ENCODE measurements at regions of chr14 and their contacts with region 1.

Region 1: DNA sequence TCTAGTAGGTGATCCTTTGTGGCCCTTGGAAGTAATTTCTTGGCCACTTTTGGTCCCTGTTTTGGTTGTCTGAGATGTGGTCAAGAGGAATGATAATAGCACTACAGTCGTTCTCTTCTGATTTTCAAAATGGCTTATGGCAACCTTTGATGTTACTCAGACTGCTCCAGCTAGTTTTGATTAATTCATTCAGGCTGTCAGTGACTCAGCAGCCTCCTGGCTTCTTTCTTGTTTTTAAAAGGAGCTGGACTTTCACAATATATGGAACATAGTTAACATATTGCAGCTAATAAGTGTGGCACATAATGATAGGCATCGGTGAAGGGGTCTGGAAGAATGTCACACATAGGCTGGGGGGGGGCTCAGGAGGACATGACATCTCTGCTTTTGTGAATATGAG is 47.4 kb downstream of the WDR20 start:
- DNase-seq: no peak
- H3K4me3 Mint-ChIP-seq: no peak overlapping the region
- H3K27ac Mint-ChIP-seq: peak overlapping the region; percentile 38
- H3K4me1 Mint-ChIP-seq: peaks cover 27% of the 10 kb centered on the region
- H3K27me3 Mint-ChIP-seq: no peaks in the 10 kb centered on the region

Region 2: DNA sequence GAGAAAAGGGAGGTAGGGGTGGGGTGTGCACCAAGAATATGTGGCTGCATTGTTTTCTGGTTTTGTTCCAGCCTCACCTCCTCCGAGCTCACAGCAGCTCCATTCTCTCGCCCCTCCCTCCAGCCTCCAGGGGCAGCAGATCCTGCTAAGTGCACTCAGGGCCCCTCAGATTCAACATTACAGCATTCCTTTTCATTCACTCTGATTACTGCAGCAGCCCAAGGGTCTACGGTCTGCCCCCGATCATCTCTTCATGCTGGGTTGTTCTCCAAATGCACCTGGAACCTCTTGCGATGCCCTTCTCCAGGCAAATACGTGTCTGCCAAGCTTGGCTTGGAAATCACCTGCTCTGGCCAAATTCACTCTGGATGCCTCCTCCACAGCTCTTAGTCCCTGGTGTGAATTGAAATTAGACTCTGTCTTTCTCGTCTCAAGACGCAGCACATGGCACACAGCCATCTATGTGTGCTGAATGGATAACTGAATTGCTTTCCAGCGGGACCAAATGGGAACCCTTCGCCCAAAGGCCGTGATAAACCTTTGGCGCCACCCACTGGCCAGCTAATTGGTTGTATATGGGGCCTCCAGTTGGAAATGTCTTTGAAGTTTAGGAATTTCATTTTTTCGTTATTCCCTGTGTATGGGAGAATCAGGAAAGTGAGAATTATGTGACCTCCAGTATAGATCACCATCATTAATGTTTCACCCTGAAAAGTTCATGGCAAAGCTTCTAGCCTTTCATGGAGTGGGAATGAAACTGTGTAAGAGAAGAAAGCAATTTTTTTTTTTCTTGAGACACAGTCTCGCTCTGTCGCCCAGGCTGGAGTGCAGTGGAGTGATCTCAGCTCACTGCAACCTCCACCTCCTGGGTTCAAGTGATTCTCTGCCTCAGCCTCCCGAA is 90.6 kb before region 1 on chr14:
- intact Hi-C with region 1: loop called (anchors 10 kb)
- DNase-seq: peak; percentile 90
- H3K4me3 Mint-ChIP-seq: no peak overlapping the region
- H3K27ac Mint-ChIP-seq: peak overlapping the region; percentile 66
- H3K4me1 Mint-ChIP-seq: peaks cover 21% of the 10 kb centered on the region
- H3K27me3 Mint-ChIP-seq: peaks cover 2% of the 10 kb centered on the region

Region 3: GRCh38 chr14:102139248-102140026 is 47.6 kb before region 1 on chr14 and contains the start of gene WDR20:
- intact Hi-C with region 1: loop called (anchors 1 kb)
- DNase-seq: peak; percentile 100
- H3K4me3 Mint-ChIP-seq: peak within 1 kb of the TSS; percentile 97
- H3K27ac Mint-ChIP-seq: peak within 1 kb of the TSS; percentile 95
- H3K4me1 Mint-ChIP-seq: peaks cover 21% of the 10 kb centered on the region
- H3K27me3 Mint-ChIP-seq: no peaks in the 10 kb centered on the region
- total RNA-seq, gene WDR20: 30.4 and 31.0 TPM in 2 replicates

Region 4: GRCh38 chr14:102200690-102201352 is 13.8 kb after region 1 on chr14:
- intact Hi-C with region 1: loop called (anchors 2 kb)
- DNase-seq: no peak
- H3K4me3 Mint-ChIP-seq: peak overlapping the region; percentile 2
- H3K27ac Mint-ChIP-seq: peak overlapping the region; percentile 74
- H3K4me1 Mint-ChIP-seq: peaks cover 40% of the 10 kb centered on the region
- H3K27me3 Mint-ChIP-seq: no peaks in the 10 kb centered on the region